Activated T-helper 2 cell treated with anti-CD3 and anti-CD28 coated beads, Interferon-gamma antibody, Interleukin-2, Interleukin-4, amounts not matched to agents 10 μg/mL and 5 μg/mL and 100 μg/mL, durations not matched to agents 14 hours and 24 hours and 36 hours (primary cell): ENCODE measurements at regions of chr4 and their contacts with region 1.

Region 1: DNA sequence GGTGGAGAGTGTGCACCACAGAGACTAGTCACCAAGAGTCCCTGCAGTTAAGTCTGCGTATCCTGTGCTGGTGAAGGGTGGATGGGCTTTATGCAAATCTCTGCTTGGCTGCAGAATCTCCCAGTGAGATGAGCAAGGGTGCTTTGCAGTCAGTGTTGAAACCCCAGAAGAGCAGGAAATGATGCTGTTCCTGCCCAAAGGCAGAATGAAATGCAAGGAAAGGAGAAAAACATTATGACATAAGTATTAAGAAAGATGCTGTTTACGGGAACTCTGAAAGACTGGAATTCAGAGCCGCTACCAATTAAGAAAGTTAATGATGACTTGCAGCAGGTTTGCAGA is 25.4 kb upstream of the ACSL1 start:
- DNase-seq: no peak
- H3K4me3 Mint-ChIP-seq: no peak overlapping the region
- H3K27ac Mint-ChIP-seq: no peak overlapping the region
- H3K4me1 Mint-ChIP-seq: peaks cover 36% of the 10 kb centered on the region
- H3K27me3 Mint-ChIP-seq: peaks cover 2% of the 10 kb centered on the region

Region 2: DNA sequence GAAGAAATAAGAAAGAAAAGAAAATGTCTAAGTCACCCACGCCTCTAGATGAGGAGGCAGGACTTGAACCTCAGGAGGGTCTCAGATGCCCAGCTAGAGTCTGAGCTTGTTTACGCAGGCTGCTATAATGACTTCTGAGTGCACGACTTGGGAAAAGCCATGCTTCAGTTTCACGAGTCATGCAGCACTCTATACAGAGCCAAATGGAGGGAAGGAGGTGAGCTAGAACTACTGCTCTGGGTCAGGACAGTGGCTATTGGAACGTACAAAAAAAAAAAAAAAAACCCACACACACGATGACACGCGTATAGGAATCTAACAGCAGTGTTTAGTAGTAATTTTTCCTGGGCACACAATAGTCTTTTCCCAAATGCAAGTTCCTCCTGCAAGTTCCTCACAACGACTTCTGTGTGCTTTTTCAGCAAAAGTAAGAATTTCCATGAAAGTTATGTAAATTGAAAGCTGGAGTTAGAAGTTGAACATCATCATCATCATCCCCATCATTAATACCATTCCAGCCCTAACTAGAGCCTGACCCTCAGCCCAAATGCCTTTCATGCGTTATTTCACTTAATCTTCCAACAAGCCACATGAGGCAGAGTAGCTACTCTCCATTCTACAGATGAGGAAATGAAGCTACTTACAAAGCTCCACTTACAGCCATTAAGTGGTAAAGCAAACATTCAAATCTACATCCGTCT is 413.5 kb before region 1 on chr4:
- intact Hi-C with region 1: no loop called
- DNase-seq: no peak
- H3K4me3 Mint-ChIP-seq: no peak overlapping the region
- H3K27ac Mint-ChIP-seq: no peak overlapping the region
- H3K4me1 Mint-ChIP-seq: peaks cover 36% of the 10 kb centered on the region
- H3K27me3 Mint-ChIP-seq: no peaks in the 10 kb centered on the region

Region 3: DNA sequence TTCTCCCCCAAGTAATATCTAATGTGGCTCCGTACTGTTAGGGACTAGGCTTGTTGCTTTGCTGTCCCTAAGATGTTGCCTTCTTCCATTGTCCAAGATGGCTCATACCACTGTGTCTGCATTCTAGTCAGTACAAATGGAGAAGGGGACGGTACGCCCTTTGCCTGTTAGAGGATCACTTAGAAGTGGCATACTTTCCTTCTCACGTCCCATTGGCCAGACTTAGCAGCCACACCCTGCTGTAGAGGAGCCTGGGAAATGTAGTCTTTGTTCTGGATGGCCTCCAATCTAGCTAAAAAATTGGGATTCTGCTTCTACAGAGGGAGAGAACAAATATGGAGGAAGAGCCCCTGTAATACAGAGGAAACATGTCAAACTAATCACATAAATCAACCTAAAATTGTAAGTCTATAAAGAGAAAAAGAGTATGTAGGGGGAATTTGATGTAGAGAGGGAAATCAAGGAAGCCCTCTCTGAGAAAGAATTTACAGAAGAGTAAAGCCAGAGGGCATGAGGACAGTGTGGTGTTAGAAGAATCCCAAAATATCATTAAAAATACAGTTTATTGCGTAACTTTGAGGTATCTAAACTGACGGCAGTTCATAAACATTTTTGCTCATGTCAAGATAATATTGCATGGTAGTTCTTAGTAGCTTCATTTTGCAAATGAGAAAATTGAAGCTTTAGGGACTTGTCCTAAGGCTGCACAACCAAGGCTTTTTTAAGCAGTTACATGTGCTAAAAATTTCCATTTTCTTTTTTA is 186.5 kb before region 1 on chr4:
- intact Hi-C with region 1: no loop called
- DNase-seq: no peak
- H3K4me3 Mint-ChIP-seq: no peak overlapping the region
- H3K27ac Mint-ChIP-seq: no peak overlapping the region
- H3K4me1 Mint-ChIP-seq: peaks cover 31% of the 10 kb centered on the region
- H3K27me3 Mint-ChIP-seq: no peaks in the 10 kb centered on the region

Region 4: DNA sequence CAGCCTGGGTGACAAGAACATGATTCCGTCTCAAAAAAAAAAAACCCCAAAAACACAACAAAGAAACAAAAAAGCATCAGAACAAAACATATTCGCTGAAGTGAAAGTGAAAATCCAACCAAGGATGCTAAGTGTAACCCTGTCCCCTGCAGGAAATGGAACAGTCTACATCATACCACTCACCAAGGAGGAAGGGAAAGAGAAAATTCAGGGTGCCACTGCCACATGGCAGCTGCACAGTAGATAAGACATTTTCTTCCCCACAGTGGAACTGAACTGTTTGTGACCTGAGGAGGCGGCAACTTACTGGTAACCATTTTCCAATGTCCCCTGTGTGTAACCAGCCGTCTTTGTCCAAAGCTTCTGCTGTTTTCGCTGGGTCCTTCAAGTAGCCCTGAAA is 89.1 kb before region 1 on chr4:
- intact Hi-C with region 1: loop called (anchors 2 kb)
- DNase-seq: peak; percentile 61
- H3K4me3 Mint-ChIP-seq: peak overlapping the region; percentile 1
- H3K27ac Mint-ChIP-seq: peak overlapping the region; percentile 75
- H3K4me1 Mint-ChIP-seq: peaks cover 19% of the 10 kb centered on the region
- H3K27me3 Mint-ChIP-seq: no peaks in the 10 kb centered on the region

Region 5: DNA sequence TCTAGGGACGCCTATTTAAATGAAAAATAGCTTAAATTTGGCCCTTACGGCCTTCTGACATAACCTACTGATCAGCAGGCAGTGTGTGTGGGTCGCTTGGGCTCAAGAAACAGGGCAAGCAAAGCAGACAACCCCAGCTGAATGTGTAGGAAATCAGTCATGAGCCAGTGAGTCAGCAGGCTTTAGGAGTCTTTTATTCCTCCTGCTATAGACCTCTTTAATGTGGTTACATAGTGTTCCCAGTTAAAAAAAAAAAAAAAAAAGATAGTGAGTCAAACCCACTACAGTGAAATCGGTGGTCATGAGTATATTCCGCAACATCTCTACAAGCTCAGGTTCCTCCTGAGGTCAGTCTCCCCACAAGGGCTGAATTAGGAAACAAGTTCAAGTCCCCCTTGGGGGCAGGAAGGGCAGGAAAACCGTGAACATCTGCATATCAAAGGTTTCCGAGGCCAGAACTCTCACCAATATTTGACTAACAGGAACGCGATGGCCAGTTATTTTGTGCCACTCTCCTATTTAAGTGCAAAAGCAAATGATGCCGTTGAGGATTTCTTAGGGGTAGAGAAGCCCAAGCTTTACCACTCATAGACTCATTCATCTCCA is 58.1 kb before region 1 on chr4:
- intact Hi-C with region 1: loop called (anchors 2 kb)
- DNase-seq: no peak
- H3K4me3 Mint-ChIP-seq: no peak overlapping the region
- H3K27ac Mint-ChIP-seq: peak overlapping the region; percentile 34
- H3K4me1 Mint-ChIP-seq: peaks cover 44% of the 10 kb centered on the region
- H3K27me3 Mint-ChIP-seq: no peaks in the 10 kb centered on the region

Region 6: GRCh38 chr4:184968784-184969201 is 117.6 kb after region 1 on chr4:
- intact Hi-C with region 1: loop called (anchors 10 kb)
- DNase-seq: no peak
- H3K4me3 Mint-ChIP-seq: no peak overlapping the region
- H3K27ac Mint-ChIP-seq: no peak overlapping the region
- H3K4me1 Mint-ChIP-seq: peaks cover 2% of the 10 kb centered on the region
- H3K27me3 Mint-ChIP-seq: peaks cover 8% of the 10 kb centered on the region

Region 7: GRCh38 chr4:184979461-184980124 is 128.4 kb after region 1 on chr4:
- intact Hi-C with region 1: no loop called
- DNase-seq: no peak
- H3K4me3 Mint-ChIP-seq: no peak overlapping the region
- H3K27ac Mint-ChIP-seq: no peak overlapping the region
- H3K4me1 Mint-ChIP-seq: no peaks in the 10 kb centered on the region
- H3K27me3 Mint-ChIP-seq: peaks cover 16% of the 10 kb centered on the region

Region 8: DNA sequence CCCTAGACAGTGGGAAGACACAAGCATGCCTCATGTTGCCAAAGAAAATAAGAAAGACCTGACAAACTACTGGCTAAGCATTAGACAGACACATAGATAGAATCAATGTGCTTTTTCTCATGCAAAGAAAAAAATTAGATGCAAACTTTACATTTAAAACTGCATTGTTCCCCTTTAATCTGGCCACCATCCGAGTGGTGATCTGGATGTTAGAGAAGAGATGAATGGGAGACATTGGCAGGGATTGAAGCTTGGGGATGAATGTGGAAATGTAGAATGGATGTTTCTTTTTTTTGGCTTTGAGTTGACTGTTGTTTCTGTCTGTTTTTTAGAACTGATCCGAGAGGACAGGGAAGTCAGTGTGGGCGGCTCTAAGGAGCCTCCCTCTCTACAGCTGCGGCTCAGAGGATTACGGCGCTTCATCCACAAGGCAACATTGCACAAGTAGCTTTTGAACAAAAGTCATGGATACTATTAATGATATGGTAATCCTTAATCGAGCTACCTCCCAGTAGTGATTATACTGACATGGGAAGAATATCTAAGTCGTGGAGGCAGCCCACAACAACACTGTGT is 220.2 kb after region 1 on chr4:
- intact Hi-C with region 1: no loop called
- DNase-seq: no peak
- H3K4me3 Mint-ChIP-seq: no peak overlapping the region
- H3K27ac Mint-ChIP-seq: no peak overlapping the region
- H3K4me1 Mint-ChIP-seq: no peaks in the 10 kb centered on the region
- H3K27me3 Mint-ChIP-seq: peaks cover 28% of the 10 kb centered on the region